Caco-2 (cell line): ENCODE measurements at regions of chr4 and their contacts with region 1.

Region 1: GRCh38 chr4:147924604-147925412 is 192.9 kb downstream of the ARHGAP10 start:
- DNase-seq: peak in 1 of 2 experiments; percentile 30
- H3K4me3 ChIP-seq: no peak overlapping the region
- H3K4me3 Mint-ChIP-seq: no peak overlapping the region
- H3K27ac Mint-ChIP-seq: no peak overlapping the region
- H3K4me1 ChIP-seq: no peaks in the 10 kb centered on the region
- H3K4me1 Mint-ChIP-seq: peaks cover 12% of the 10 kb centered on the region
- H3K27me3 ChIP-seq: no peaks in the 10 kb centered on the region
- H3K27me3 Mint-ChIP-seq: no peaks in the 10 kb centered on the region
- CTCF ChIP-seq: peak in 1 of 2 experiments; percentile 64

Region 2: DNA sequence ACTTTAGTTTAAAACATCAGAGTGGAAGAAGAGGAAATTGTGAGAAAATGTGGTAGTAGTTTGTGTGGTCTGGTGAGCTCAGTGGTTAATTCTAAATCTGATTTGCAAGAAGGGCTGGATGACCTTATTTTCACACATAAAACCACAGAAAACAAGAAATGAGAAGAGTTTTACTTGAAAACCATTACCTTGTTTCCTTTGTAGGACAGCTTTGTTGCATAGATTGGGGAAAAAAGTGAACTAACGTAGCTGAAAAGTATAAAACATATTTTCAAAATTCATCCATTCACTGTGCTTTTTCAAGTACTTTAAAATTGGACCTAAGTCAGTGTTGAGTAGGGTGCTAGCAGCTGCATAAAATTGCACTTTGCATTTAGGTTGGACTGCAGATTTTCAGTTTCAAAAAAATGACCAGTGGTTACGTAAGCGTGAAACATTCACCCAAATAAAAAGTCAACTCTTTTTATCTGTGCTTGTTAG is 18.4 kb after region 1 on chr4:
- CTCF ChIA-PET with region 1: no interaction called
- POLR2A ChIA-PET with region 1: no interaction called
- intact Hi-C with region 1: no loop called
- DNase-seq: no peak
- H3K4me3 ChIP-seq: no peak overlapping the region
- H3K4me3 Mint-ChIP-seq: no peak overlapping the region
- H3K27ac Mint-ChIP-seq: no peak overlapping the region
- H3K4me1 ChIP-seq: no peaks in the 10 kb centered on the region
- H3K4me1 Mint-ChIP-seq: no peaks in the 10 kb centered on the region
- H3K27me3 ChIP-seq: no peaks in the 10 kb centered on the region
- H3K27me3 Mint-ChIP-seq: no peaks in the 10 kb centered on the region
- CTCF ChIP-seq: no peak

Region 3: GRCh38 chr4:147994076-147994475 is 69.3 kb after region 1 on chr4:
- CTCF ChIA-PET with region 1: no interaction called
- POLR2A ChIA-PET with region 1: no interaction called
- intact Hi-C with region 1: no loop called
- DNase-seq: no peak
- H3K4me3 ChIP-seq: no peak overlapping the region
- H3K4me3 Mint-ChIP-seq: no peak overlapping the region
- H3K27ac Mint-ChIP-seq: no peak overlapping the region
- H3K4me1 ChIP-seq: no peaks in the 10 kb centered on the region
- H3K4me1 Mint-ChIP-seq: peaks cover 5% of the 10 kb centered on the region
- H3K27me3 ChIP-seq: no peaks in the 10 kb centered on the region
- H3K27me3 Mint-ChIP-seq: no peaks in the 10 kb centered on the region
- CTCF ChIP-seq: no peak

Region 4: GRCh38 chr4:148152871-148153625 is 228.2 kb after region 1 on chr4:
- CTCF ChIA-PET with region 1: no interaction called
- POLR2A ChIA-PET with region 1: no interaction called
- intact Hi-C with region 1: loop called (anchors 1 kb)
- DNase-seq: no peak
- H3K4me3 ChIP-seq: no peak overlapping the region
- H3K4me3 Mint-ChIP-seq: no peak overlapping the region
- H3K27ac Mint-ChIP-seq: no peak overlapping the region
- H3K4me1 ChIP-seq: no peaks in the 10 kb centered on the region
- H3K4me1 Mint-ChIP-seq: no peaks in the 10 kb centered on the region
- H3K27me3 ChIP-seq: no peaks in the 10 kb centered on the region
- H3K27me3 Mint-ChIP-seq: peaks cover 8% of the 10 kb centered on the region
- CTCF ChIP-seq: no peak

Region 5: DNA sequence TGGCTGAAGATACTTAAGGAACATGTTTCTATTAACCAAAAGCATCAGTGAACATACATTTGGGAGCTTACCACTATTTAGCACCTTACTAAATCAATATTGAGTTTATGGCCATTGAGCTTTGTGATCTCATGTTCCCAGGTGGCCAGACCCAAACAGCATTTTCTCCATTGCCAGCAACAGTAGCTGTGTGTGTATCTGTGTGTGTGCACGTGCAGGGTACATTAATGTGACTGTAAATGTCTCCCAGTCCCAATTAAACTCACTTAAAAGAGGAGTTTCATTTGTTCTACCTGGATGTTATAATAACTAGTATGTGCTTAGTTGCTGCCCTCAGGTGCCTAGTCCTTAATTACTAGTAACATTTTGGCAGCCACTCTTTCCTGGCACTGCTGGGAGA is 235.0 kb after region 1 on chr4:
- CTCF ChIA-PET with region 1: no interaction called
- POLR2A ChIA-PET with region 1: no interaction called
- intact Hi-C with region 1: loop called (anchors 2 kb)
- DNase-seq: no peak
- H3K4me3 ChIP-seq: no peak overlapping the region
- H3K4me3 Mint-ChIP-seq: no peak overlapping the region
- H3K27ac Mint-ChIP-seq: no peak overlapping the region
- H3K4me1 ChIP-seq: peaks cover 29% of the 10 kb centered on the region
- H3K4me1 Mint-ChIP-seq: peaks cover 21% of the 10 kb centered on the region
- H3K27me3 ChIP-seq: no peaks in the 10 kb centered on the region
- H3K27me3 Mint-ChIP-seq: no peaks in the 10 kb centered on the region
- CTCF ChIP-seq: no peak

Region 6: GRCh38 chr4:148415500-148415899 is 490.7 kb after region 1 on chr4:
- CTCF ChIA-PET with region 1: no interaction called
- POLR2A ChIA-PET with region 1: no interaction called
- intact Hi-C with region 1: loop called (anchors 10 kb)
- DNase-seq: no peak
- H3K4me3 ChIP-seq: no peak overlapping the region
- H3K4me3 Mint-ChIP-seq: no peak overlapping the region
- H3K27ac Mint-ChIP-seq: no peak overlapping the region
- H3K4me1 ChIP-seq: no peaks in the 10 kb centered on the region
- H3K4me1 Mint-ChIP-seq: no peaks in the 10 kb centered on the region
- H3K27me3 ChIP-seq: no peaks in the 10 kb centered on the region
- H3K27me3 Mint-ChIP-seq: peaks cover 5% of the 10 kb centered on the region
- CTCF ChIP-seq: no peak